ENCODE measurements at regions of chr6 and their contacts with region 1.

Region 1: GRCh38 chr6:12011276-12012076 is 636 bp upstream of the HIVEP1 start:
- DNase-seq: peak; percentile 81
- ATAC-seq: peak; percentile 74
- H3K4me3 ChIP-seq: no peak overlapping the region
- H3K27ac ChIP-seq: peak overlapping the region; percentile 97; the same call in 1 of the 2 replicates
- H3K4me1 ChIP-seq: peaks cover 8% of the 10 kb centered on the region
- H3K27me3 ChIP-seq: no peaks in the 10 kb centered on the region
- CTCF ChIP-seq: no peak
- EP300 ChIP-seq: peak in 1 of 2 experiments; percentile 47; a peak in 1 of 4 replicates
- POLR2A ChIP-seq: peak; percentile 77
- RAD21 ChIP-seq: no peak

Region 2: GRCh38 chr6:11711003-11711983 is 300.2 kb before region 1 on chr6:
- CTCF ChIA-PET with region 1: interaction called, 5 read pairs
- POLR2A ChIA-PET with region 1: interaction called, 5 read pairs
- RAD21 ChIA-PET with region 1: interaction called, 43 read pairs
- SMC1A ChIA-PET with region 1: interaction called, 12 read pairs
- in situ Hi-C with region 1: loop called (anchors 25 kb)
- intact Hi-C with region 1: loop called (anchors 5 kb)
- DNase-seq: peak; percentile 67
- ATAC-seq: peak; percentile 62
- H3K4me3 ChIP-seq: peak overlapping the region; percentile 17; the same call in 1 of the 2 replicates
- H3K27ac ChIP-seq: peak overlapping the region; percentile 75
- H3K4me1 ChIP-seq: peaks cover 45% of the 10 kb centered on the region
- H3K27me3 ChIP-seq: no peaks in the 10 kb centered on the region
- CTCF ChIP-seq: no peak
- EP300 ChIP-seq: peak; percentile 73 to 78; a peak in 2 of 4 replicates
- POLR2A ChIP-seq: 0 out of 2 replicates have a peak, but pooled peaks have one; percentile 32
- RAD21 ChIP-seq: peak; percentile 15; the same call in 1 of the 2 replicates

Region 3: GRCh38 chr6:11785774-11786579 is 225.5 kb before region 1 on chr6:
- CTCF ChIA-PET with region 1: interaction called, 4 read pairs
- POLR2A ChIA-PET with region 1: interaction called, 6 read pairs
- RAD21 ChIA-PET with region 1: interaction called, 8 read pairs
- SMC1A ChIA-PET with region 1: interaction called, 10 read pairs
- in situ Hi-C with region 1: no loop called
- intact Hi-C with region 1: loop called (anchors 2 kb)
- DNase-seq: peak; percentile 93
- ATAC-seq: peak; percentile 93
- H3K4me3 ChIP-seq: peak overlapping the region; percentile 46
- H3K27ac ChIP-seq: peak overlapping the region; percentile 89
- H3K4me1 ChIP-seq: peaks cover 25% of the 10 kb centered on the region
- H3K27me3 ChIP-seq: no peaks in the 10 kb centered on the region
- CTCF ChIP-seq: no peak
- EP300 ChIP-seq: peak; percentile 83 to 92
- POLR2A ChIP-seq: peak; percentile 66
- RAD21 ChIP-seq: peak; percentile 27; the same call in 1 of the 2 replicates

Region 4: GRCh38 chr6:11810039-11810541 is 201.4 kb before region 1 on chr6:
- CTCF ChIA-PET with region 1: no interaction called
- POLR2A ChIA-PET with region 1: no interaction called
- RAD21 ChIA-PET with region 1: no interaction called
- SMC1A ChIA-PET with region 1: no interaction called
- in situ Hi-C with region 1: no loop called
- intact Hi-C with region 1: no loop called
- DNase-seq: no peak
- ATAC-seq: no peak
- H3K4me3 ChIP-seq: no peak overlapping the region
- H3K27ac ChIP-seq: no peak overlapping the region
- H3K4me1 ChIP-seq: peaks cover 20% of the 10 kb centered on the region
- H3K27me3 ChIP-seq: no peaks in the 10 kb centered on the region
- CTCF ChIP-seq: no peak
- EP300 ChIP-seq: no peak
- POLR2A ChIP-seq: no peak
- RAD21 ChIP-seq: no peak

Region 5: DNA sequence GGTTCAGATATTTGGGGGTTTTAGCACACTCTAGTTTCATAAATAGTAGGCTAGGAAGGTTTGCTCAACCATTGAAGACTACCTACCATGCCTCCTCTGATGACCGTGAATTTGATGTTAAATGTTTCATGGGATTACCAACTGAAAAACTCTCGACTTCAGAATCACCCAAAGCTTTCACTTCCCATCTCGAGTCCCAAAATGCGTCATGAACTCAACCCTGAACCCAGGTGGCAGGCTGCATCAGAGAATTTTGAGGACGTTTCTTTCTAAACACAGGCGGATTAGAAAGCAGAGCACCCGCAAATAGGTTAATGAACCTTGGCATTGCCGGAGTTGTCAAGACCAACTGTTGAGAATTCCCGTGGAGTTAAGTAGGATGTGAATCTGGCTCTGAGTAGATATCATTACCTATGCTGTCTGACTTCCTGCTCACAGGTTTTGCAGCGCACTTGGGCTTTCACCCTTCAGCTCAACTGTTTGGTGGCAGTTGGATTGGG is 134.5 kb before region 1 on chr6:
- CTCF ChIA-PET with region 1: no interaction called
- POLR2A ChIA-PET with region 1: no interaction called
- RAD21 ChIA-PET with region 1: interaction called, 4 read pairs
- SMC1A ChIA-PET with region 1: interaction called, 6 read pairs
- in situ Hi-C with region 1: no loop called
- intact Hi-C with region 1: loop called (anchors 1 kb)
- DNase-seq: peak; percentile 91
- ATAC-seq: peak; percentile 90
- H3K4me3 ChIP-seq: peak overlapping the region; percentile 22; the same call in 1 of the 2 replicates
- H3K27ac ChIP-seq: peak overlapping the region; percentile 82
- H3K4me1 ChIP-seq: peaks cover 19% of the 10 kb centered on the region
- H3K27me3 ChIP-seq: no peaks in the 10 kb centered on the region
- CTCF ChIP-seq: no peak
- EP300 ChIP-seq: peak; percentile 92 to 94; a peak in 3 of 4 replicates
- POLR2A ChIP-seq: no peak
- RAD21 ChIP-seq: no peak; the same call in 1 of the 2 replicates

Region 6: GRCh38 chr6:12051861-12052368 is 40.4 kb after region 1 on chr6:
- CTCF ChIA-PET with region 1: interaction called, 5 read pairs
- POLR2A ChIA-PET with region 1: interaction called, 11 read pairs
- RAD21 ChIA-PET with region 1: interaction called, 23 read pairs
- SMC1A ChIA-PET with region 1: interaction called, 22 read pairs
- in situ Hi-C with region 1: no loop called
- intact Hi-C with region 1: loop called (anchors 1 kb)
- DNase-seq: peak; percentile 92
- ATAC-seq: peak; percentile 76
- H3K4me3 ChIP-seq: 0 out of 2 replicates have a peak overlapping the region, but pooled peaks have one; percentile 11
- H3K27ac ChIP-seq: peak overlapping the region; percentile 98
- H3K4me1 ChIP-seq: peaks cover 47% of the 10 kb centered on the region
- H3K27me3 ChIP-seq: no peaks in the 10 kb centered on the region
- CTCF ChIP-seq: peak in 1 of 3 experiments; percentile 6; a peak in 1 of 6 replicates
- EP300 ChIP-seq: peak; percentile 95 to 98
- POLR2A ChIP-seq: no peak
- RAD21 ChIP-seq: 0 out of 2 replicates have a peak, but pooled peaks have one; percentile 7

Region 7: GRCh38 chr6:12113190-12113577 is 101.7 kb after region 1 on chr6:
- CTCF ChIA-PET with region 1: interaction called, 4 read pairs
- POLR2A ChIA-PET with region 1: interaction called, 4 read pairs
- RAD21 ChIA-PET with region 1: interaction called, 12 read pairs
- SMC1A ChIA-PET with region 1: interaction called, 20 read pairs
- in situ Hi-C with region 1: no loop called
- intact Hi-C with region 1: loop called (anchors 2 kb)
- DNase-seq: no peak
- ATAC-seq: peak; percentile 60
- H3K4me3 ChIP-seq: peak overlapping the region; percentile 32; the same call in 1 of the 2 replicates
- H3K27ac ChIP-seq: peak overlapping the region; percentile 88
- H3K4me1 ChIP-seq: peaks cover 49% of the 10 kb centered on the region
- H3K27me3 ChIP-seq: no peaks in the 10 kb centered on the region
- CTCF ChIP-seq: no peak
- EP300 ChIP-seq: no peak
- POLR2A ChIP-seq: peak; percentile 41; the same call in 1 of the 2 replicates
- RAD21 ChIP-seq: no peak

Region 8: GRCh38 chr6:12354499-12354898 is 343.0 kb after region 1 on chr6:
- CTCF ChIA-PET with region 1: no interaction called
- POLR2A ChIA-PET with region 1: no interaction called
- RAD21 ChIA-PET with region 1: no interaction called
- SMC1A ChIA-PET with region 1: interaction called, 3 read pairs
- in situ Hi-C with region 1: no loop called
- intact Hi-C with region 1: loop called (anchors 2 kb)
- DNase-seq: peak; percentile 91
- ATAC-seq: peak; percentile 77
- H3K4me3 ChIP-seq: no peak overlapping the region
- H3K27ac ChIP-seq: peak overlapping the region; percentile 56
- H3K4me1 ChIP-seq: peaks cover 47% of the 10 kb centered on the region
- H3K27me3 ChIP-seq: no peaks in the 10 kb centered on the region
- CTCF ChIP-seq: no peak
- EP300 ChIP-seq: peak; percentile 43 to 56; a peak in 2 of 4 replicates
- POLR2A ChIP-seq: no peak
- RAD21 ChIP-seq: no peak